ENCODE measurements at regions of chrX and their contacts with region 1.

Region 1: GRCh38 chrX:109485470-109486340 is 3.8 kb upstream of the GUCY2F start:
- DNase-seq: peak in 1 of 2 experiments; percentile 57
- H3K4me3 ChIP-seq: no peak overlapping the region
- H3K27ac ChIP-seq: no peak overlapping the region
- H3K4me1 ChIP-seq: no peaks in the 10 kb centered on the region
- H3K27me3 ChIP-seq: no peaks in the 10 kb centered on the region
- CTCF ChIP-seq: peak; percentile 41 to 99 (median 73)
- EP300 ChIP-seq: no peak
- POLR2A ChIP-seq: no peak
- RAD21 ChIP-seq: peak; percentile 71 to 81

Region 2: GRCh38 chrX:109440475-109440874 is 45.2 kb before region 1 on chrX:
- CTCF ChIA-PET with region 1: no interaction called
- POLR2A ChIA-PET with region 1: no interaction called
- DNase-seq: no peak
- H3K4me3 ChIP-seq: no peak overlapping the region
- H3K27ac ChIP-seq: no peak overlapping the region
- H3K4me1 ChIP-seq: no peaks in the 10 kb centered on the region
- H3K27me3 ChIP-seq: no peaks in the 10 kb centered on the region
- CTCF ChIP-seq: no peak
- EP300 ChIP-seq: no peak
- POLR2A ChIP-seq: no peak
- RAD21 ChIP-seq: no peak

Region 3: DNA sequence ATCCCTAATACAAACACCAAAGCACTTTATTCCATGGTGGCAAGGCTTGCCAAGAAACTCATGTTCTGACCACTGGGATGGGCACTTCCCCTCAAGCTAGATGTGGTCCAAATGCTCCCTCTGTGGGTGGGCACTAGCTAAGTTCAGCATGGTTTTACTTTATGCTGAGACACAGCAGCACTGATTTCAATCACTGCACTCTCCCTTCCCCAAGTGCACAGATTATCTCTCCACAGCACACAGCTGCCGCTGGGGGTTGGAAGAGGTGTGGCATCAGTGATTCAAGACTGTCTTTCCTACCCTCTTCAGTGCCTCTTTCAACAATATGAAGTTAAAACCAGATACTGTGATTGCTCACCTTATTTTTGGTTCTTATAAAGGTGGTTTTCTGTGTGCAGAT is 12.7 kb after region 1 on chrX:
- CTCF ChIA-PET with region 1: interaction called, 14 read pairs
- POLR2A ChIA-PET with region 1: no interaction called
- DNase-seq: no peak
- H3K4me3 ChIP-seq: no peak overlapping the region
- H3K27ac ChIP-seq: no peak overlapping the region
- H3K4me1 ChIP-seq: no peaks in the 10 kb centered on the region
- H3K27me3 ChIP-seq: no peaks in the 10 kb centered on the region
- CTCF ChIP-seq: no peak
- EP300 ChIP-seq: no peak
- POLR2A ChIP-seq: no peak
- RAD21 ChIP-seq: no peak

Region 4: GRCh38 chrX:109624641-109625616 is 139.2 kb after region 1 on chrX and contains the start of gene KCNE5:
- CTCF ChIA-PET with region 1: interaction called, 12 read pairs
- POLR2A ChIA-PET with region 1: no interaction called
- DNase-seq: peak in 1 of 2 experiments; percentile 63
- H3K4me3 ChIP-seq: peak within 1 kb of the TSS in 3 of 4 experiments; percentile 14 to 56 (median 24); a peak in 7 of 8 replicates
- H3K27ac ChIP-seq: no peak within 1 kb of the TSS
- H3K4me1 ChIP-seq: peaks cover 0 to 8% (median 0%) of the 10 kb centered on the region in 4 experiments; a peak in 1 of 7 replicates
- H3K27me3 ChIP-seq: peaks cover 0 to 7% (median 5%) of the 10 kb centered on the region in 4 experiments; a peak in 5 of 7 replicates
- CTCF ChIP-seq: no peak
- EP300 ChIP-seq: no peak
- POLR2A ChIP-seq: peak in 1 of 2 experiments; percentile 61; a peak in 2 of 3 replicates
- RAD21 ChIP-seq: no peak
- total RNA-seq, gene KCNE5: 3.1 and 3.6 TPM in 2 replicates

Region 5: DNA sequence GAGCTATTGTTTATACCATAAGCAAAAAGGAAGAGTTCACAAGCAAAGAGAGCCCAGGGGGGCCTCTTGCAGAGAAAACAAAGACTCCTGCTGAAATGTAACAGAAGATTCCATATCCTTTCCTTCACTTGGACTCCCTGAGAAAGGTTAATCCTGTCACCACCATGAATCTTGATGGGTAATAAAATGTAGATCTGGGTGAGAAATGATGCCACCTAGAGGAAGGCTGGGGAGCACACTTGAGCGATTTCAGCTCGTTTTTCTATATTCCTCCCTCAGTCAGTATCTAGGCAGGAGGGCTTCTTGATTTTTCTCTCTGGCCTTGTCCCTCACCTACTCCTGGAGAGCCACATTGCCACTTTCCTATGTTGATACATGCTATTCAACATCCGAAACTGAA is 149.5 kb after region 1 on chrX:
- CTCF ChIA-PET with region 1: interaction called, 110 read pairs
- POLR2A ChIA-PET with region 1: no interaction called
- DNase-seq: no peak
- H3K4me3 ChIP-seq: no peak overlapping the region
- H3K27ac ChIP-seq: no peak overlapping the region
- H3K4me1 ChIP-seq: no peaks in the 10 kb centered on the region
- H3K27me3 ChIP-seq: no peaks in the 10 kb centered on the region
- CTCF ChIP-seq: peak in 2 of 3 experiments; percentile 42 to 64; a peak in 3 of 4 replicates
- EP300 ChIP-seq: no peak
- POLR2A ChIP-seq: no peak
- RAD21 ChIP-seq: peak; percentile 27 to 39; a peak in 3 of 4 replicates